Right cardiac atrium (tissue), 5 donors: ENCODE measurements at regions of chr2 and their contacts with region 1.

Region 1: DNA sequence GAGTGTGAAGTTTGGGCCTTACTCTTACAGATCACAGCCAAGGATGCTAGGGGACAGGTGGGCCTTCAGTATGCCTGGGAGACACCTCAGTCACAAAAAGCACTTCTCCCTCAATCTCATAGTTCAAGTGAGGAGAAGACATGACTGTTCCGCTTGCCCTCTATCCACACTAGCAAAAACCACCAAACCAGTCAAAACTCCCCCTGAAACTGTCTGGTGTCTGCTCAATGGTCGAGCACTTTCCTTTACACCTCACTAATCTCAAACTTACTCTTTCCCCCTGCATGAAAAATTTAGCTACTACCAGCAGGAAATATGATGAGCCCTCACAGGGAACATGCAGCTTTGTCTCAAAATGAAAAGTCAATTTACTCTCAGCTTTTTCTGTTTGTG is 232.2 kb downstream of the TRIB2 start:
- DNase-seq: no peak
- ATAC-seq: no peak
- H3K4me3 ChIP-seq: no peak overlapping the region
- H3K27ac ChIP-seq: no peak overlapping the region
- H3K4me1 ChIP-seq: no peaks in the 10 kb centered on the region
- H3K27me3 ChIP-seq: no peaks in the 10 kb centered on the region

Region 2: DNA sequence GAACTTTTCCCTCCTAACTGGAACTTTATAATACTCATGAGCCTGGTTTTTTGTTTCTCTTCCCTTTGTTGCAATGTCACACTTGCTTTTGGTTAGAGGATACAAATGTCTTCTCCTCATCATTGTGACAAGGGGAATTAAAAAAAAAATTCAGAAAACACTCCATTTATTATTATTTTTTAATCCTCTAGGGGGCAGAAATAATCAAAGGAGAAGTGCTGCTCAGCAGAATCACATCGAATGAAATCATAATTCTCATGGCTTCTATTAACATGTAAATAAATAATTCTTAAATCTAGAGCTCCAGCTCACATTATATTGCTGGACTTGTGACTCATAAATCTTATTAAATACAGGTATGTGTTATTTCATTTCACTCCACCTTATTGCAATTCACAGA is 41.6 kb after region 1 on chr2:
- intact Hi-C with region 1: loop called in 1 of 4 experiments (anchors 10 kb)
- DNase-seq: no peak
- ATAC-seq: no peak
- H3K4me3 ChIP-seq: no peak overlapping the region
- H3K27ac ChIP-seq: no peak overlapping the region
- H3K4me1 ChIP-seq: no peaks in the 10 kb centered on the region
- H3K27me3 ChIP-seq: no peaks in the 10 kb centered on the region